SK-N-SH (cell line): ENCODE measurements at regions of chr10 and their contacts with region 1.

Region 1: GRCh38 chr10:80583685-80584084 is 46.0 kb downstream of the SH2D4B start:
- DNase-seq: no peak
- H3K4me3 ChIP-seq: no peak overlapping the region
- H3K27ac ChIP-seq: no peak overlapping the region
- H3K4me1 ChIP-seq: no peaks in the 10 kb centered on the region; a peak in 1 of 4 replicates
- H3K27me3 ChIP-seq: no peaks in the 10 kb centered on the region
- CTCF ChIP-seq: no peak
- EP300 ChIP-seq: no peak
- RAD21 ChIP-seq: no peak

Region 2: DNA sequence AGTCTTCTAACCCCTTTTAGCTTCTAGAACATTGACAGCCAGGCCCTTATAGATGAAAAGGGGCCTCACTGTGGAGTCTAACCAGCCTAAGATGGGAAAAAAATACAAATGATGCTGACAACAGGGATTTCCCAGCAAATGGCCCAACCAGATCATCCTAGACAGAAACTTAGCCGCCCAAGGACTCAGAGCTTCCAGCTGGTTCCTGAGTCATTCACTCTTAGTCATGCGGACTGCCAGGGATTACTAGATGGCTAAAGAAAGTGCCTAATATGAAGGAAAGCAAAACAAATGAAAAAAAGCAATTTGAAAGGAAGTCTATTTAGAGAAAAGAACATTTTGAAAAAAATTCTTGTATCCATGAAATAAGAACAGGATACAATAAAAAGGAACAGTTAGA is 105.9 kb before region 1 on chr10:
- CTCF ChIA-PET with region 1: no interaction called
- POLR2A ChIA-PET with region 1: no interaction called
- DNase-seq: no peak
- H3K4me3 ChIP-seq: no peak overlapping the region; a peak in 1 of 4 replicates
- H3K27ac ChIP-seq: peak overlapping the region in 1 of 2 experiments; percentile 39; a peak in 1 of 4 replicates
- H3K4me1 ChIP-seq: peaks cover 3 to 12% of the 10 kb centered on the region in 2 experiments; a peak in 3 of 4 replicates
- H3K27me3 ChIP-seq: no peaks in the 10 kb centered on the region
- CTCF ChIP-seq: no peak
- EP300 ChIP-seq: no peak
- RAD21 ChIP-seq: no peak

Region 3: DNA sequence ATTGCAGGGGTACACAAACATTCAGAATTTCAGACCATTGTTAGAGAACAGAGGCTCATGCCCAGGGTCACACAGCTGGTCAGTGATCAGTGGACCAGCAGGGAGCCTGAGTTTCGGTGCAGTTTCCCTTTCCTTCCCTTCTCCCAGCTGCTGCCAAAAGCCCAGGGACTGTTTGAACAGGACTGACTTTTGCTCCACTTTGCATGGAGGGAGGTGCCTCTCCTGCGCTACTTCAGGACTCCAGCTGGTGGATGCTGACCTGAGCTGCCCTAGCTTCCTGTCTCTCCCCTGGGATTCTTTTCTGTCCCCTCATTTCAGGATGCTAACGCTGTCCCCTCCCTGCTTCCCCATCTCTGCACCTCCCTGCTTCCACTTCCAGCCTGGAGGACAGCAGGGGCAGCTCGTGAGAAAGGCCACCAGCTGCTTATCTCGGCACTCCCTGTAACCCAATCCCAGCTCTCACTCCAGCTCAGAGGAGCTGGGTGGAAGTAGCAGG is 31.5 kb before region 1 on chr10:
- CTCF ChIA-PET with region 1: no interaction called
- POLR2A ChIA-PET with region 1: no interaction called
- DNase-seq: no peak
- H3K4me3 ChIP-seq: no peak overlapping the region
- H3K27ac ChIP-seq: no peak overlapping the region
- H3K4me1 ChIP-seq: no peaks in the 10 kb centered on the region
- H3K27me3 ChIP-seq: no peaks in the 10 kb centered on the region
- CTCF ChIP-seq: no peak
- EP300 ChIP-seq: no peak
- RAD21 ChIP-seq: no peak

Region 4: GRCh38 chr10:80596391-80597257 is 12.9 kb after region 1 on chr10:
- CTCF ChIA-PET with region 1: interaction called, 29 read pairs
- POLR2A ChIA-PET with region 1: no interaction called
- DNase-seq: peak; percentile 58
- H3K4me3 ChIP-seq: peak overlapping the region in 1 of 2 experiments; percentile 32; a peak in 1 of 4 replicates
- H3K27ac ChIP-seq: no peak overlapping the region
- H3K4me1 ChIP-seq: peaks cover 0 to 5% of the 10 kb centered on the region in 2 experiments; a peak in 2 of 4 replicates
- H3K27me3 ChIP-seq: no peaks in the 10 kb centered on the region
- CTCF ChIP-seq: peak; percentile 66
- EP300 ChIP-seq: no peak
- RAD21 ChIP-seq: peak; percentile 49